ENCODE measurements at regions of chr9 and their contacts with region 1.

Region 1: DNA sequence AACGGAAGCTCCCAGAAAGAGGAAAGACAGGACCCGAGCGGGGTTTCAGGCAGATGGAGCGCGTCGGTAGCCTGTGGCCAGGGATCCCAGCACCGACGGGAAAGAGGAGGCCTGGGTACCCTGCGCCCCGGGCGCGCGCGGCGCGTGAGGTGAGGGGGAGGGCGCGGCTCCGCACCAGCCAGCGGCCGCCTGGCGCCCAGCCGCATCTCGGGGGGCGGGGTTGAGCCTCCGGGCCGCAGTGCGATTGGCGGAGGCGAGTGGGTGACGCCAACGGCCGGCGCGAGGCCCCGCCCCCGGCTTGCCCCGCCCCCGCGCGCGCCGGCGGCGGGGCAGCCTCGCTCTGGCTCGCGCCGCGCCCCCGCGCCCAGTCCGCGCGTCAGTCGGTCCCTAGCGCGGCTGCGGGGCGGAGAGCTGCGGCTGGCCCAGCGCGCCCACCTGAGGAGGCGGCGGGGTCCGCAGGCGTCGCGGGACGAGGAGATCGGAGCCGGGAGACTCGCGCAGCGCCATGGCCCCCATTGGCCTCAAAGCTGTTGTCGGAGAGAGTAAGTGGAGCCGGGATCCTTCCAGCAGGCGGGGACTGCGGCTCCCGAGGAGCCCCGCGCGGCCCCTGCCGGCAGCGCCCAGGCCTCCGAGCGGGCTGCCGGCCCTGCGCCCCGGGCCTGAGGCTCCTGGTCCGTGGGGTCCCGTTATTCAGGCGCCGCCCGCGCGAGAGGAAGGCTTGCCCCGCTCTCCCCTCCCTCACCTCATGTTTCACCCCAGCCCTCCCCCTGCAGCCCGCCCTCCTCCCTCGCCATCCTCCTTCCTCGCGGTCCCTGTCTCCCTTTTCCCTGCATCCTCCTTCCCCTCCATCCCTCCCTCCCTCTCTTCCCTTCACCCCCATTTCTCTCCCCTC is at the start of gene STXBP1:
- DNase-seq: peak; percentile 82
- H3K4me3 ChIP-seq: peak within 1 kb of the TSS; percentile 59 to 82 (median 79)
- H3K27ac ChIP-seq: no peak within 1 kb of the TSS
- H3K4me1 ChIP-seq: peaks cover 20% of the 10 kb centered on the region
- H3K27me3 ChIP-seq: peaks cover 2 to 3% of the 10 kb centered on the region in 2 experiments
- CTCF ChIP-seq: peak in 1 of 2 donors; percentile 28
- POLR2A ChIP-seq: peak; percentile 85
- total RNA-seq, gene STXBP1: 50.5 and 51.3 TPM in 2 replicates

Region 2: DNA sequence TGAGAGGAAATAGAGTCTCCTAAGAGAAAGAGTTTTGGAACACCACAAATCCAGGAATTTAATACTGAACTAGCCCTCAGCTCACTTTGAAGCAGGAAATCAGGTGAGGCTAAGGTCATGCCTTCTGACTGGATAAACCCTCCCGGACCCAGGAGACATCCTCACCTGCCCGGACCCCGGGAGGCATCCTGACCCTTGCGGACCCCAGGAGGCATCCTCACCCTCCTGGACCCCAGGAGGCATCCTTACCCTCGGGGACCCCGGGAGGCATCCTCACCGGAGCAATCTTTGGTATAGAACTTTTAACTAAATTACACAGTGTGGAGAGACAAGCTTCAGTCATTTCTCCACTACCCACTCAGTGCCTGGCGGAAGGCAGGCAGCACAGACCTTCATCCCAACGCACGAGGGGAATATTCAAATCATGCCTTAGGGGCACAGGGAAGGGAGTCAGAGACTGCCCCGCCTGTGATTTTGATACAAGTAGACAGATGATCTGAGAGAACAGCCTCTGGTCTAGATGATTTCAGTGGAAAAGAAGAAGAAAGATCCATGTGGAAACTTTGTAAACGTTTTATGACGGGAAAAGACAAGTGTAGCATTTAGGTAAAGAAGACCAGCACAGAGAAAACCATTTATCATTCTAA is 21.2 kb after region 1 on chr9:
- CTCF ChIA-PET with region 1: interaction called, 5 read pairs
- POLR2A ChIA-PET with region 1: interaction called, 5 read pairs
- dilution Hi-C with region 1: no loop called
- intact Hi-C with region 1: loop called (anchors 2 kb)
- DNase-seq: peak; percentile 12
- H3K4me3 ChIP-seq: no peak overlapping the region
- H3K27ac ChIP-seq: no peak overlapping the region
- H3K4me1 ChIP-seq: peaks cover 22% of the 10 kb centered on the region
- H3K27me3 ChIP-seq: no peaks in the 10 kb centered on the region
- CTCF ChIP-seq: no peak
- POLR2A ChIP-seq: no peak

Region 3: DNA sequence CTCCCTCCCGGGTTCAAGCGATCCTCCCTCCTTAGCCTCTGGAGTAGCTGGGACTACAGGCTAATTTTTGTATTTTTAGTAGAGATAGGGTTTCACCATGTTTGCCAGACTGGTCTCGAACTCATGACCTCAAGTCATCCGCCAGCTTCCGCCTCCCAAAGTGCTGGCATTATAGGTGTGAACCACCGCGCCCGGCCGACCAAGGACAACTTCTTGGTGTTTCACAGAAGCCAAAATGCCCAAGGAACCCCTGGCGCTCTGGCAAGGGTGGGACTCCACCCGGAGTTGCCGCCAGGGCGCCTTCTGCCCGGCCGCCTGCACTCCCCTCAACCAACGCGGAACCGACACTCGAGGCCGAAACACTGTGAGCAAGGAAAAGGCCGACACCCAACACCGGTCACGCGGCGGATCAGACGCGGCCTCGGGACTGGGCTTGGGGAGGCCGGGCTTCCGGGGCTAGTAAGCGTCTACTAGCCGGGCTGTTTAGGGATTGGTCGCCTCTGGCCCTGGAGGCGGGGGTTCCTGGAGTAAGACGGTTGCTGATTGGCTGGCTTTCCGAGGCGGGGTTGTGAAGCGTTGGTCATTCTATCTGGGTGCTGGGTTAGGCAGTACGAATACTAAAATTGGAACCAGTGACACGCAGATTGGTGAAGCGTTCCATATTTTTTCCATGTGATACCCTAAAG is 87.0 kb after region 1 on chr9:
- CTCF ChIA-PET with region 1: no interaction called
- POLR2A ChIA-PET with region 1: no interaction called
- dilution Hi-C with region 1: no loop called
- intact Hi-C with region 1: loop called (anchors 5 kb)
- DNase-seq: peak; percentile 97
- H3K4me3 ChIP-seq: peak overlapping the region in 2 of 3 experiments; percentile 17 to 18
- H3K27ac ChIP-seq: peak overlapping the region; percentile 35
- H3K4me1 ChIP-seq: no peaks in the 10 kb centered on the region
- H3K27me3 ChIP-seq: no peaks in the 10 kb centered on the region
- CTCF ChIP-seq: peak in 1 of 2 donors; percentile 10
- POLR2A ChIP-seq: peak; percentile 42

Region 4: GRCh38 chr9:127715394-127716337 is 103.5 kb after region 1 on chr9 and contains the starts of genes PTRH1 and TTC16:
- CTCF ChIA-PET with region 1: no interaction called
- POLR2A ChIA-PET with region 1: no interaction called
- dilution Hi-C with region 1: no loop called
- intact Hi-C with region 1: loop called (anchors 5 kb)
- DNase-seq: peak; percentile 95
- H3K4me3 ChIP-seq: peak within 1 kb of the TSS; percentile 67 to 88 (median 85)
- H3K27ac ChIP-seq: peak within 1 kb of the TSS; percentile 36
- H3K4me1 ChIP-seq: peaks cover 5% of the 10 kb centered on the region
- H3K27me3 ChIP-seq: no peaks in the 10 kb centered on the region
- CTCF ChIP-seq: no peak
- POLR2A ChIP-seq: no peak
- total RNA-seq, gene PTRH1: 19.6 and 25.1 TPM in 2 replicates
- total RNA-seq, gene TTC16: not detected in 2 replicates